CD14-positive monocyte (primary cell): ENCODE measurements at regions of chr3 and their contacts with region 1.

Region 1: GRCh38 chr3:196942226-196942914 is at the start of gene NCBP2:
- DNase-seq: peak; percentile 98 to 100 (median 99)
- H3K4me3 ChIP-seq: peak within 1 kb of the TSS; percentile 61 to 87 (median 70)
- H3K4me3 Mint-ChIP-seq: peak within 1 kb of the TSS; percentile 96 to 98
- H3K27ac ChIP-seq: peak within 1 kb of the TSS; percentile 90 to 95
- H3K27ac Mint-ChIP-seq: peak within 1 kb of the TSS; percentile 93 to 99 (median 97)
- H3K4me1 ChIP-seq: peaks cover 21 to 25% of the 10 kb centered on the region in 2 donors
- H3K4me1 Mint-ChIP-seq: peaks cover 26% of the 10 kb centered on the region
- H3K27me3 ChIP-seq: no peaks in the 10 kb centered on the region
- H3K27me3 Mint-ChIP-seq: peaks cover 0 to under 1% (median 0%) of the 10 kb centered on the region in 3 donors
- CTCF ChIP-seq: peak; percentile 70
- polyA plus RNA-seq, gene NCBP2: 26.1 to 42.9 (median 33.4) TPM

Region 2: GRCh38 chr3:196568246-196569002 is 373.9 kb before region 1 on chr3 and contains the starts of genes FBXO45 and WDR53:
- intact Hi-C with region 1: loop called in 1 of 2 experiments (anchors 5 kb)
- DNase-seq: peak; percentile 89 to 93 (median 91)
- H3K4me3 ChIP-seq: peak within 1 kb of the TSS; percentile 74 to 98 (median 98)
- H3K4me3 Mint-ChIP-seq: peak within 1 kb of the TSS; percentile 93 to 97
- H3K27ac ChIP-seq: peak within 1 kb of the TSS; percentile 66 to 94
- H3K27ac Mint-ChIP-seq: peak within 1 kb of the TSS; percentile 90 to 97 (median 94)
- H3K4me1 ChIP-seq: peaks cover 30 to 53% of the 10 kb centered on the region in 2 donors
- H3K4me1 Mint-ChIP-seq: peaks cover 32% of the 10 kb centered on the region
- H3K27me3 ChIP-seq: no peaks in the 10 kb centered on the region
- H3K27me3 Mint-ChIP-seq: no peaks in the 10 kb centered on the region
- CTCF ChIP-seq: no peak
- polyA plus RNA-seq, gene FBXO45: 1.8 to 2.8 (median 2.3) TPM
- polyA plus RNA-seq, gene WDR53: 4.1 to 6.7 (median 5.3) TPM

Region 3: GRCh38 chr3:196757876-196758739 is 184.3 kb before region 1 on chr3:
- intact Hi-C with region 1: no loop called
- DNase-seq: peak in 1 of 3 donors; percentile 17
- H3K4me3 ChIP-seq: no peak overlapping the region
- H3K4me3 Mint-ChIP-seq: no peak overlapping the region
- H3K27ac ChIP-seq: peak overlapping the region in 1 of 2 donors; percentile 22
- H3K27ac Mint-ChIP-seq: peak overlapping the region in 5 of 7 donors; percentile 15 to 82 (median 71)
- H3K4me1 ChIP-seq: no peaks in the 10 kb centered on the region
- H3K4me1 Mint-ChIP-seq: peaks cover 31% of the 10 kb centered on the region
- H3K27me3 ChIP-seq: no peaks in the 10 kb centered on the region
- H3K27me3 Mint-ChIP-seq: no peaks in the 10 kb centered on the region
- CTCF ChIP-seq: no peak

Region 4: GRCh38 chr3:196867507-196868296 is 74.7 kb before region 1 on chr3 and contains the start of gene SENP5:
- intact Hi-C with region 1: loop called (anchors 5 kb)
- DNase-seq: peak; percentile 86 to 92 (median 92)
- H3K4me3 ChIP-seq: peak within 1 kb of the TSS; percentile 73 to 83 (median 80)
- H3K4me3 Mint-ChIP-seq: peak within 1 kb of the TSS; percentile 97
- H3K27ac ChIP-seq: peak within 1 kb of the TSS; percentile 84 to 90
- H3K27ac Mint-ChIP-seq: peak within 1 kb of the TSS; percentile 93 to 98 (median 97)
- H3K4me1 ChIP-seq: peaks cover 18 to 25% of the 10 kb centered on the region in 2 donors
- H3K4me1 Mint-ChIP-seq: peaks cover 17% of the 10 kb centered on the region
- H3K27me3 ChIP-seq: no peaks in the 10 kb centered on the region
- H3K27me3 Mint-ChIP-seq: peaks cover 0 to 2% (median 0%) of the 10 kb centered on the region in 3 donors
- CTCF ChIP-seq: no peak
- polyA plus RNA-seq, gene SENP5: 6.7 to 10.4 (median 8.4) TPM

Region 5: GRCh38 chr3:196954832-196955231 is 12.5 kb after region 1 on chr3:
- intact Hi-C with region 1: no loop called
- DNase-seq: no peak
- H3K4me3 ChIP-seq: no peak overlapping the region
- H3K4me3 Mint-ChIP-seq: no peak overlapping the region
- H3K27ac ChIP-seq: no peak overlapping the region
- H3K27ac Mint-ChIP-seq: no peak overlapping the region
- H3K4me1 ChIP-seq: no peaks in the 10 kb centered on the region
- H3K4me1 Mint-ChIP-seq: no peaks in the 10 kb centered on the region
- H3K27me3 ChIP-seq: no peaks in the 10 kb centered on the region
- H3K27me3 Mint-ChIP-seq: peaks cover 0 to 5% (median 1%) of the 10 kb centered on the region in 3 donors
- CTCF ChIP-seq: no peak